ENCODE measurements at regions of chr11 and their contacts with region 1.

Region 1: GRCh38 chr11:65615229-65615941 is at the start of gene PCNX3:
- DNase-seq: peak; percentile 100
- H3K4me3 Mint-ChIP-seq: peak within 1 kb of the TSS; percentile 91
- H3K27ac Mint-ChIP-seq: peak within 1 kb of the TSS; percentile 96
- H3K4me1 Mint-ChIP-seq: peaks cover 26% of the 10 kb centered on the region
- H3K27me3 Mint-ChIP-seq: no peaks in the 10 kb centered on the region
- CTCF ChIP-seq: no peak
- total RNA-seq, gene PCNX3: 40.9 and 45.8 TPM in 2 replicates

Region 2: GRCh38 chr11:65662799-65663638 is 47.6 kb after region 1 on chr11 and contains the start of gene RELA:
- CTCF ChIA-PET with region 1: no interaction called
- POLR2A ChIA-PET with region 1: interaction called, 40 read pairs
- intact Hi-C with region 1: no loop called
- DNase-seq: peak; percentile 91
- H3K4me3 Mint-ChIP-seq: peak within 1 kb of the TSS; percentile 74
- H3K27ac Mint-ChIP-seq: peak within 1 kb of the TSS; percentile 73
- H3K4me1 Mint-ChIP-seq: peaks cover 12% of the 10 kb centered on the region
- H3K27me3 Mint-ChIP-seq: no peaks in the 10 kb centered on the region
- CTCF ChIP-seq: no peak
- total RNA-seq, gene RELA: 82.1 and 83.0 TPM in 2 replicates

Region 3: DNA sequence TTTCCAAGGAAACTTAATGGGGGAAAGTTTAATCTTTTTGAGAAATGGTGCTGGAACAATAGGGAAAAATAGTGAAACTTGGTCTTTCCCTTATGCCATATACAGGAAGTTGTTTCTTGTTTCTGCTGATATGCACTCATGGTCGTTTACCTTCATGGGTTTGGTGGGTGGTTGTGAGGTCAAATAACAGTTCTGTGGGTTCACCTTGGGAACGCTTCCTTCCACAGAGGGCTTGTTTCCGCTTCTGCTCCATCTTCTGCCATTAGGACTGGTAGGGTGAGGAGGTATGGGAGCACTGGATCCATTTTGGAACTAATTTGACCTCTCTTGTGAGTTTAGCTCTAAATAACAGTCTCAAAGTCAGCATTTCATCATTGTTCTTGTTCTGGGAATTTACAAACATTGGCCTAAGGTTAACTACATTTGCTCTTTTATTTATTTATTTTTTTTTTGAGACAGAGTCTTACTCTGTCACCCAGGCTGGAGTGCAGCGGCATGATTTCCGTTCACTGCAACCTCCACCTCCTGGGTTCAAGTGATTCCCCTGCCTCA is 64.9 kb after region 1 on chr11:
- CTCF ChIA-PET with region 1: no interaction called
- POLR2A ChIA-PET with region 1: no interaction called
- intact Hi-C with region 1: no loop called
- DNase-seq: no peak
- H3K4me3 Mint-ChIP-seq: no peak overlapping the region
- H3K27ac Mint-ChIP-seq: no peak overlapping the region
- H3K4me1 Mint-ChIP-seq: no peaks in the 10 kb centered on the region
- H3K27me3 Mint-ChIP-seq: peaks cover 16% of the 10 kb centered on the region
- CTCF ChIP-seq: no peak

Region 4: GRCh38 chr11:65703846-65704245 is 88.5 kb after region 1 on chr11:
- CTCF ChIA-PET with region 1: no interaction called
- POLR2A ChIA-PET with region 1: no interaction called
- intact Hi-C with region 1: no loop called
- DNase-seq: no peak
- H3K4me3 Mint-ChIP-seq: no peak overlapping the region
- H3K27ac Mint-ChIP-seq: no peak overlapping the region
- H3K4me1 Mint-ChIP-seq: no peaks in the 10 kb centered on the region
- H3K27me3 Mint-ChIP-seq: peaks cover 44% of the 10 kb centered on the region
- CTCF ChIP-seq: no peak